AG04449 (cell line): ENCODE measurements at regions of chr7 and their contacts with region 1.

Region 1: DNA sequence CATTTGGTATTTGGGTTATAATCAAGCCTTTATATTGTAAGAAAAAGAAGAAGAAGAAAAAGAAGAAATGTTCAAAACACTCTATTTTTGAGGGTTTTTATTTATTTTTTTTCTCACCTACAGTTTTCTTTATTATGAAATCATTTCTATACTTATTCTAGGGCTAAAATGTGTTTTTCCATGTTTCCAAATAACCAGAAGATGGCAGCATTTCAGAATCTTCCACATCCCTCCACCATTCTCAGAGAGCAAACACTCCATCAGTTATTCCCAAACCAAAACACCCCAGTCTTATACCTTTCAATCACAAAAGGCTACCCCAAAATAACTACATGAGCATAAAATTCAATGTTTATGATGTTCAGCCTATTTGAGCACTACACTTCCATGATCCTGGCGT is 38.7 kb upstream of the PPP1R17 start:
- DNase-seq: no peak
- H3K4me3 ChIP-seq: no peak overlapping the region
- CTCF ChIP-seq: peak; percentile 8

Region 2: DNA sequence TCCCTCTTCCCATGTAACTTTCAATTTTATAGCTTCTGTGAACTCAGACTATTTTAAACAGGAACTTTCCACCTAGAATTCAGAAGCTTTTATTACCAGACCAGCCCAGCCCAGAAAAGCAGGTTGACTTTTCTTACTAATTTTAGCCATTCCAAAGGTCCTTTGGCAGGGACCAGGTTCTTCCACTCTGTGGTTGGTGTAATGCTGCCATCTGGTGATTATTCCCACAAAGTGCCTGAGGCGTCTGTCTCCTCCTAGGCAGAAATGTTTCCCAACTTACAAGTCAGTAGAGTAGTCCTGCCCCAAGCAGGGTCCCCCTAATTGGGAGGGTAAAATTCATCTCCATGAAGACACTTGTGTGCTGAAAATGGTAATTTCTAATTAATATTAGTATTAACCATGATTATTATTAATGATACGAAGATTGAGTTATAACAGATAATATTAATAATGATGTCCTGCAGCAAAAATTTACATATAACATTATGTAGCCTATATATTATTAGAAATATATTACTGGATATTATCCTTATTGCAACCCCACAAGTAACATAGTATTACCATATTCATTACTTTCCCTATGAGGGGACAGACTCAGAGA is 14.3 kb before region 1 on chr7:
- CTCF ChIA-PET with region 1: interaction called, 21 read pairs
- POLR2A ChIA-PET with region 1: no interaction called
- DNase-seq: peak; percentile 19
- H3K4me3 ChIP-seq: no peak overlapping the region
- CTCF ChIP-seq: peak; percentile 52

Region 3: DNA sequence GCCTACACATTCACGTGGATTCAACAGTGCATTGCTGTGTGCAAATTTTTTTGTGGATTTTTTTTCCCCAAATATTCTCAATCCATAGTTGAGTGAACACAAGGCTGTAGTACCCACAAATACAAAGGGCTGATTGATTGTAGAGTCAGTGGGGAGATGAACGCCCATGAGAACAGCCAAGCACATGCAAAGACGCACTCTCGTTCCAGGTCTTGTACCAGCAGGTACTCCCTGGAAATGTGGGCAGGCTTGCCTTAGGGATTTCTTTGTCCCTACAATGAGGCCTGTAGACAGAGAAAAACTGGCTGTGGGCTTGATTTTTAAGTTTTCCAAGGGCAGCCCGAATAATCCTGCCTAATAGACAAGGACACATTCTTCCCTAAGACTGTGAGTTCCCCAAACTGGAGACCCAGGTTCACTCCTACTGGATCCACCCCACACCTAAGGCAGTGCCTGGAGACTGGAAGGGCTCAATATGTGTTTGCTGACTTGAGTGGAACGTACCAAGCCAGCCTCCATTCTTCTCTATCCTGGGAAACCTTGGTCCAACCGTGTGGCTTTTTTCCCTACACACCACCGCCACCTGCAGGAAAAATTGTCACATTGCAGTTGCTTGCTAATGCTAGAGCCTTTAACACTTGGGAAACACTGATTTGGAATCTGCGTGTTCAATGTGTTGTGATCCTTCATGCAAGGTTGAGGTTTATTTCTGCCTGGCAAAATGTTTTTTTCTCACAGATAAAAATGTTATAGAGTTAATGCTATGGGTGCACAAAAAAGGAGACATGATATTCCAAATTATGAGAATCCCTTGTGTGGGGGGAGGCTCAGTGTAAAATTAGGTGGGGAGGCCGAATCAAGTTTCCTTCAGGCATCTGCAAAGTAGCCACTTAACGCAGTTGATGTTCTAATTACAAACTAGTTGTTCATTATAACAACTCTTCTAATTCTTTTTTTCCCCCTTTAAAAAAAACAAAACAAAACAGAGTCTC is 88.0 kb after region 1 on chr7:
- CTCF ChIA-PET with region 1: interaction called, 11 read pairs
- POLR2A ChIA-PET with region 1: no interaction called
- DNase-seq: no peak
- H3K4me3 ChIP-seq: no peak overlapping the region
- CTCF ChIP-seq: peak; percentile 81

Region 4: GRCh38 chr7:31776616-31777015 is 128.3 kb after region 1 on chr7:
- CTCF ChIA-PET with region 1: no interaction called
- POLR2A ChIA-PET with region 1: no interaction called
- DNase-seq: no peak
- H3K4me3 ChIP-seq: no peak overlapping the region
- CTCF ChIP-seq: no peak